Prostate gland (tissue), 2 donors: ENCODE measurements at regions of chr20 and their contacts with region 1.

Region 1: DNA sequence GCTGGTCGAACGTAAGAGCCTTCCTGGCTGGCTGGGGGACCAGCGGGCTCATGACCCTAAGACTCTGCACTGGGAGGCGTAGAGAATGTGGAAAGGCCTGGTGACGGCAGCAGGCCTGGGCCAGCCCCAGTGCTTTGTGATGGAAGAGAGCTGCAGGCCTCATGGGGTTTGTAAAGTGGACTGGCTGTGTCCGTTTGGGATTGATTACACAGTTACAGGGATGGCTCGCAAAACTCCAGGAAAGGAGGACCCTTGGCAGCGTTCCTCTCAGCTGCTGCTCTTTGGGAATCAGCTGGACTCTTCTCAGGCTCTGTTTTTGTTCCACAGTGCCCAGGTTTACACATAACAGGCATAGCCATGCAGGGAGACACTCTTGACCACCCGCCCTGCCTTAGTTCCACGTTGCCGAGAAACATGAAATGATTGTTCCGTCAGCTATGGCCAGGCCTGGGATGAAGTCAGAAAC is 88.9 kb downstream of the SLX4IP start:
- DNase-seq: no peak
- H3K4me3 ChIP-seq: no peak overlapping the region
- H3K27ac ChIP-seq: peak overlapping the region; percentile 37 to 54
- H3K4me1 ChIP-seq: no peaks in the 10 kb centered on the region
- H3K27me3 ChIP-seq: no peaks in the 10 kb centered on the region
- CTCF ChIP-seq: no peak
- POLR2A ChIP-seq: no peak

Region 2: GRCh38 chr20:10508468-10509251 is 15.4 kb before region 1 on chr20:
- intact Hi-C with region 1: loop called (anchors 1 kb)
- DNase-seq: peak; percentile 46
- H3K4me3 ChIP-seq: no peak overlapping the region
- H3K27ac ChIP-seq: peak overlapping the region; percentile 77 to 82
- H3K4me1 ChIP-seq: peaks cover 34% of the 10 kb centered on the region
- H3K27me3 ChIP-seq: no peaks in the 10 kb centered on the region
- CTCF ChIP-seq: no peak
- POLR2A ChIP-seq: no peak